Mucosa of descending colon (tissue), 3 donors: ENCODE measurements at regions of chr13 and their contacts with region 1.

Region 1: GRCh38 chr13:49976314-49977258 is 20.3 kb upstream of the TRIM13 start:
- DNase-seq: peak; percentile 71 to 87 (median 80)
- ATAC-seq: peak; percentile 93
- H3K4me3 ChIP-seq: no peak overlapping the region
- H3K4me1 ChIP-seq: peaks cover 4% of the 10 kb centered on the region
- CTCF ChIP-seq: peak; percentile 80

Region 2: DNA sequence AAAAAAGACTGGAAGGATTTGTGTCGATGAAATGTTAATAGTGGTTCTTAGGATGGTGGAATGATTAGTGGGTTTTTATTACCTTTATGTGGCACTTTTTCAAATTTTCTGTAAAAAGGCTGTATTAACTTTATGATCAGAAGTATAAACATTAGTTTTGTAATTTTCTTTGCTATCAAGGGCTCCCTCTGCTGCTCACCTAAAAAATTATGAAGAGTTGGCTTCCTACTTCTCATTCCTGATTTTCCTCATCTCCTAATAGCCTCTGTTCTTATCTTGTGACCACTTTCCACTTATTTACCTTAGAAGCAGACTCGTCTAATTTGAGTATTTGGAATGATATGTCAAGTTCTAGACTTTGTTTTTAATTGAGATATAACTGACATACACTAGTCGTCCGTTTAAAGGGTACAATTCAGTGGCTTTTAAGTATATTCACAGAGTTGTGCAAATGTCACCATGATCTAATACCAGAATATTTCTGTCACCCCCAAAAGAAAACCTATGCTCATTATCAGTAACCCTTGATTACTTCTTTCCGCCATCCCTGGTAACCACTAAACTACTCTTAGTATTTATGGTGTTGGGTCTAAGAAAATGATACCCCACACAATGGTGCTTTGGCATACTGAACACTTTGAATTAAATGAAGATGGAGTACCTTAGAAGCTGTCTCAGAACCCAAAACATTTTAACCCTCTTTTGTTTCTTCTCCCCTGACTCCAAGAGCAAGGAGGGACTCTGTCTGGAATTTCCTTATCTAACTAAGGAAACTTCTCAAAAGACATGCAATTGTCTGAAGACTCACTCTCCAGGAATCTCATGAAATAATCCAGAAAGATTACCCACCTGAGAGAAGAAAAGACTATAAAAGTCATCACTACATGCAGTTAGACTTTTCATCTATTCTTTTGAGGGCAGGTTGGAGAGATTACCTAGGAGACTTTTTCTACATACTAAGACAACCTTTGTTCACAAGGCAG is 555.6 kb after region 1 on chr13:
- intact Hi-C with region 1: loop called in 1 of 2 experiments (anchors 10 kb)
- DNase-seq: peak in 1 of 3 donors; percentile 55
- ATAC-seq: no peak
- H3K4me3 ChIP-seq: no peak overlapping the region
- H3K4me1 ChIP-seq: peaks cover 14% of the 10 kb centered on the region
- CTCF ChIP-seq: no peak

Region 3: DNA sequence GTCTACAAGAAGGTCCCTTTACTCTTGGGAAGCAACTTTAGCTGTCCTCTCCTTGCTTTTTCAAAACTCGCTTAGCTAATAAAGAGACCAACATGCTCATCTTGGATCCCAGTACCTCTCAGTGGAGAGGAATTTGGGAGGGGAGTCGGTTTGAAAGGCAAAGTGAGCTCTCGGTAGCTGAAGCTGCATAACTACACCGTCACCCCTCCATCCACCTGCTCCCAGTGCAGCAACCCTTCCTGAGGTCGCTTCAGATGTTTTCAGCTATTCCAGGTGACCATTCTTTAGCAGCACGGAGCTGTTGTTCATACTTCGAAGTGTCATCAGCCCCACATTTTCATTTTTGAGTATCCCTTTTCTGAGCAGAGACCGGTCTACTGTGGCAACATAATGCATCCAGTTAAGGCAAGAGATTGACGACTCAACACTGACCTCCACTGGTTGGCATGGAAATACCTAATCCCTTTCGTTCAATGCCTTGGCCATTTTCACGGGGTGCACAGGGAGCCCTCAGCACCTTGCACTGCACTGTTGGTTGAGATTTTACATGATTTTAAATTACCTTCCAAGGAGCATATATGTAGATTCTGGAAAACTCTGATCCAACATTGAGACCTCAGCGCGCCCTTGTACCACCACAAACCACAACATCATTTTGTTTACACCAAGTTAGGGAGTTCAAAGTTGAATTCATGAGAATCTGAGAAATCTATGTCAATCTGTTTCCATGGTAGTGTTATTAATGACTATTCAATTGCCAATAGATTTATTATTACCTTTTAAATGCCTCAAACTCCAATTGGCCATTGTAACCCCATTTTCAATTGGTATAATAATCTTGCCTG is 824.7 kb after region 1 on chr13:
- intact Hi-C with region 1: loop called in 1 of 2 experiments (anchors 5 kb)
- DNase-seq: peak in 2 of 3 donors; percentile 26 to 66
- ATAC-seq: peak; percentile 92
- H3K4me3 ChIP-seq: no peak overlapping the region
- H3K4me1 ChIP-seq: no peaks in the 10 kb centered on the region
- CTCF ChIP-seq: peak; percentile 46